Naive thymus-derived CD4-positive, alpha-beta T cell (primary cell): ENCODE measurements at regions of chr9 and their contacts with region 1.

Region 1: DNA sequence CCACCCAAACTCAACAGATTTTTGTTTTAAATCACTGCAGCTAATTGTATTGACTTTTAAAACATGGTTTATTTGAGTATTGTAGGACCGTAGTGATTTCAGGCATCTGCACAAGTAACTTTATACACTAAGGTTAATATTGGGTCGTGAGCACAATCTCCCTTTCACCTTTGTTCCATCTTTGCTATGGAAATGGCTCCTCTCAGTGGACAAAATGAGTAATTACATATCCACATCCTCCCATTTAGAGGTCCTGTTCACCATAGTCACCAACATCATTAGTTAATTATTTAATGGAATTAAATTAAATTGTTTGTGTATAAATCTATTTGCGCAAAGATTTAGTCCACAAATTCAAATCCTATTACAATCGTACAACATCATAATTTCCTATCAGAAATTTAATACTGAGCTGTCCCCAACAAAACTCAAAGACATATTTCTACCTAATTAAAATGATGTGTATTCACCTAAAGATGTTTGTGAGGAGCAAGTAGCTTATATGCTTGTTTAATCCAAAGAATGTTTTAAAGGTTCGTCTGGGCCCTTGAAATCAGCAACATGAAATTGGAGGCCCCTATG is 173.0 kb upstream of the DAPK1 start:
- DNase-seq: peak in 6 of 9 donors; percentile 10 to 41 (median 26)
- ATAC-seq: peak; percentile 48
- H3K4me3 ChIP-seq: no peak overlapping the region
- H3K4me3 Mint-ChIP-seq: no peak overlapping the region
- H3K27ac ChIP-seq: no peak overlapping the region
- H3K27ac Mint-ChIP-seq: no peak overlapping the region
- H3K4me1 ChIP-seq: no peaks in the 10 kb centered on the region
- H3K4me1 Mint-ChIP-seq: peaks cover 0 to 1% (median 0%) of the 10 kb centered on the region in 7 donors
- H3K27me3 ChIP-seq: no peaks in the 10 kb centered on the region
- H3K27me3 Mint-ChIP-seq: peaks cover 0 to 19% (median 12%) of the 10 kb centered on the region in 5 donors

Region 2: DNA sequence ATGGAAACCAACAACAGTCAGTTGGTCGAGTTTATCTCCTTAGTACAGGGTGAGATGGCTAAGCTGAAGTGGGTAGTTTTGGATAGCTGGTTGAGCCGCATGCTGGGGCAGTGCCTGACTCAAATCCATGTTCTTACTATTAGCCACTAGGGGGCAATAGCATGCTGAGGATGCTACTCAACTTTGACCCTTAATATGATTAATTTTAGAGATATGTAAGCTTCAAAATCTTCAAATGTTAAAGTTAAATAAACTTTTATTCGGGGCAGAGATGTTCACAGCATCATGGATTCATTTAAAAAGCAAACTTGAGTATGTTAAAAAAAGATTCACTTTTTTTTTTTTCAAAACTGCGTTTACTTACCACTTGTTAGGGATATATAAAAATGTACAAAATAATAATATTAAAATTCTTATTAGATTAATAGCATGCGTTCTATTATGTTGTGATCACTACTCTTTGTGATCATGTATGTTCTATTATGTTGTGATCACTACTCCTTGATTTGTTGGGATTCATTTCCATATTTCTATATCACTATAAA is 1122.3 kb before region 1 on chr9:
- CTCF ChIA-PET with region 1: interaction called, 4 read pairs
- POLR2A ChIA-PET with region 1: no interaction called
- intact Hi-C with region 1: loop called in 1 of 2 experiments (anchors 10 kb)
- DNase-seq: peak in 6 of 9 donors; percentile 3 to 31 (median 10)
- ATAC-seq: peak; percentile 75
- H3K4me3 ChIP-seq: no peak overlapping the region
- H3K4me3 Mint-ChIP-seq: no peak overlapping the region
- H3K27ac ChIP-seq: no peak overlapping the region
- H3K27ac Mint-ChIP-seq: no peak overlapping the region
- H3K4me1 ChIP-seq: no peaks in the 10 kb centered on the region
- H3K4me1 Mint-ChIP-seq: no peaks in the 10 kb centered on the region
- H3K27me3 ChIP-seq: no peaks in the 10 kb centered on the region
- H3K27me3 Mint-ChIP-seq: peaks cover 0 to 17% (median 6%) of the 10 kb centered on the region in 5 donors

Region 3: DNA sequence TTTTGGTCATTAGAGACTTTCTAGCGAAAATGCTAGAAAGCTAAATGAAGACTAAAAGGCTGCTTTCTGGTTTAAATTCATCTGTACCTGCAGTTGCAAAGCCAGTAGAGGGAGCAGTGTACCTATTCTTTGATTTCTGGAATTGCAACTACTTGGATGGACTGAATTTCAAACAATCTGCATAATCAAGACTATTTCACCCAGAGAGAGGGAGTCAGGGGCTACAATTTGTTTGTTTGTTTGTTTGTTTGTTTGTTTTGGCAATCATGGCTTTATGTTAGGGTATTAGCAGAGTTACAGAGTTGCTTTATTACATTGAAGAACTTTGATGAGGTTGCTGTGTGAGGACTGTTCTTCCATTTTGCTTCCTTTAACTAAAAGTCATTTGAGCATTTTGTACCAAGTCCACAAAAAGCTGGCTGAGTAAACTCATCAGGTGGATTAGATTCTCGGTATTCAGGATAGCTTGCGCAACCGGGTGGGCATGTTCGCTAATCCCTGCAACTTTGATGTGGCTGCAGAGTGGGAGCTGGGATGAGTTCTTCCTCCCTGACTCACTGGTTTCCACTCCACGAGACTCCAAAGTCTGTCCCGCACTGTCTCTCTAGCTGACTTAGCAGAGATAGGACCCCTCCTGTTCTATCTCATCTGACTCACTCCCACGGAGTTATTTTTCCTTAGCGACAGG is 890.5 kb before region 1 on chr9:
- CTCF ChIA-PET with region 1: interaction called, 3 read pairs
- POLR2A ChIA-PET with region 1: no interaction called
- intact Hi-C with region 1: loop called (anchors 1 kb)
- DNase-seq: peak in 5 of 9 donors; percentile 7 to 28 (median 16)
- ATAC-seq: no peak
- H3K4me3 ChIP-seq: no peak overlapping the region
- H3K4me3 Mint-ChIP-seq: no peak overlapping the region
- H3K27ac ChIP-seq: no peak overlapping the region
- H3K27ac Mint-ChIP-seq: no peak overlapping the region
- H3K4me1 ChIP-seq: no peaks in the 10 kb centered on the region
- H3K4me1 Mint-ChIP-seq: no peaks in the 10 kb centered on the region
- H3K27me3 ChIP-seq: peaks cover 0 to 4% of the 10 kb centered on the region in 2 donors
- H3K27me3 Mint-ChIP-seq: peaks cover 2 to 40% (median 31%) of the 10 kb centered on the region in 5 donors

Region 4: GRCh38 chr9:86486891-86487837 is 837.5 kb before region 1 on chr9:
- CTCF ChIA-PET with region 1: interaction called, 4 read pairs
- POLR2A ChIA-PET with region 1: no interaction called
- intact Hi-C with region 1: loop called in 1 of 2 experiments (anchors 1 kb)
- DNase-seq: peak in 2 of 9 donors; percentile 1 to 14
- ATAC-seq: no peak
- H3K4me3 ChIP-seq: no peak overlapping the region
- H3K4me3 Mint-ChIP-seq: no peak overlapping the region
- H3K27ac ChIP-seq: no peak overlapping the region
- H3K27ac Mint-ChIP-seq: no peak overlapping the region
- H3K4me1 ChIP-seq: no peaks in the 10 kb centered on the region
- H3K4me1 Mint-ChIP-seq: peaks cover 0 to 8% (median 4%) of the 10 kb centered on the region in 7 donors
- H3K27me3 ChIP-seq: no peaks in the 10 kb centered on the region
- H3K27me3 Mint-ChIP-seq: peaks cover 0 to 5% (median 4%) of the 10 kb centered on the region in 5 donors

Region 5: GRCh38 chr9:86614871-86615849 is 709.5 kb before region 1 on chr9:
- CTCF ChIA-PET with region 1: no interaction called
- POLR2A ChIA-PET with region 1: no interaction called
- intact Hi-C with region 1: loop called in 1 of 2 experiments (anchors 2 kb)
- DNase-seq: no peak
- ATAC-seq: no peak
- H3K4me3 ChIP-seq: no peak overlapping the region
- H3K4me3 Mint-ChIP-seq: no peak overlapping the region
- H3K27ac ChIP-seq: no peak overlapping the region
- H3K27ac Mint-ChIP-seq: no peak overlapping the region
- H3K4me1 ChIP-seq: no peaks in the 10 kb centered on the region
- H3K4me1 Mint-ChIP-seq: no peaks in the 10 kb centered on the region
- H3K27me3 ChIP-seq: no peaks in the 10 kb centered on the region
- H3K27me3 Mint-ChIP-seq: peaks cover 0 to 20% (median 11%) of the 10 kb centered on the region in 5 donors

Region 6: GRCh38 chr9:86637515-86637914 is 687.2 kb before region 1 on chr9:
- CTCF ChIA-PET with region 1: no interaction called
- POLR2A ChIA-PET with region 1: no interaction called
- intact Hi-C with region 1: loop called in 1 of 2 experiments (anchors 5 kb)
- DNase-seq: no peak
- ATAC-seq: no peak
- H3K4me3 ChIP-seq: no peak overlapping the region
- H3K4me3 Mint-ChIP-seq: no peak overlapping the region
- H3K27ac ChIP-seq: no peak overlapping the region
- H3K27ac Mint-ChIP-seq: no peak overlapping the region
- H3K4me1 ChIP-seq: no peaks in the 10 kb centered on the region
- H3K4me1 Mint-ChIP-seq: no peaks in the 10 kb centered on the region
- H3K27me3 ChIP-seq: no peaks in the 10 kb centered on the region
- H3K27me3 Mint-ChIP-seq: peaks cover 5 to 37% (median 30%) of the 10 kb centered on the region in 5 donors

Region 7: DNA sequence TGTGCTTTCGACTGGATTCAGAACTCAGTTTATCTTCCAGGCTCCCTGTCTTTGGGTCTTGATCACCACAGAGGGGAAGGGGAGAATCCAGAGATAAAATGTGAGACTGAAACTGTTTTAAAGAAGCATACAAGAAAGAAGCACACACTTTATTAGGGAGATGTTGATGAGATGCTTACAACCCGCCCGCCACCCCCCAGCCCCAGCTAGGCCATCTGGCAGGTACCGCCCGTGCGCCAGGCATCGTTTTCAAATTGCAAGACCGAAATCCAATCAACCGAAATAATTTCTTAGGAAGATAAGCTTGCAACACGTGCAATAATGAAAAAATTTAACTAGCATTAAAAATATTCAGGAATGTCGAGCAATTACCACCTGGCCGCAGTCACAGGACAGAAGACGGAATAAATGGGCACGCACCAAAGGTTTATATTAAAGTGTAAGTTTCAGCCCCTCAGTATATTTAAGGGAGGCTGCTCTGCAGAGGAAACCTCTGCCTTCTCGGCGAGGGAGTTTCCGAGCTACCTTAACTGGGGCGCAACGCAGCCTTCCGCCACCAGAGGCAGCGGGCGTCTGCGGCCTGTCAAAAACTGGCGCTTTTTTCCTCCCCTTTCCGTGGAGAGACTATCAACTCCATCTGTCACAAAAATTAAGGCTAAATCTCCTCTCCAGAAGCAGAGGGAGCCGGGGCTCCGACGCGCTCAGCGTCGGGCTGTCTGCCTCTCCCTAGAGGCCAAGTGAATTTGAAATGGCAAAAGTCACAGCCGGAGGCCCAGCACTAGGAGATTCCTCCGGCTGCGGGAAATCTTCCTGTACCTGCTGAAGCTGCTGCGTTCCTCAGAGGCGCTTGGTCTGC is 376.4 kb before region 1 on chr9:
- CTCF ChIA-PET with region 1: interaction called, 3 read pairs
- POLR2A ChIA-PET with region 1: no interaction called
- intact Hi-C with region 1: loop called in 1 of 2 experiments (anchors 1 kb)
- DNase-seq: peak; percentile 50 to 70 (median 66)
- ATAC-seq: peak; percentile 80
- H3K4me3 ChIP-seq: peak overlapping the region; percentile 47
- H3K4me3 Mint-ChIP-seq: peak overlapping the region; percentile 80 to 95 (median 90)
- H3K27ac ChIP-seq: no peak overlapping the region
- H3K27ac Mint-ChIP-seq: peak overlapping the region in 5 of 9 donors; percentile 13 to 75 (median 52)
- H3K4me1 ChIP-seq: peaks cover 5 to 13% of the 10 kb centered on the region in 2 donors
- H3K4me1 Mint-ChIP-seq: peaks cover 7 to 26% (median 15%) of the 10 kb centered on the region in 7 donors
- H3K27me3 ChIP-seq: peaks cover 6 to 16% of the 10 kb centered on the region in 2 donors
- H3K27me3 Mint-ChIP-seq: peaks cover 12 to 35% (median 19%) of the 10 kb centered on the region in 5 donors

Region 8: GRCh38 chr9:86978922-86979474 is 345.7 kb before region 1 on chr9:
- CTCF ChIA-PET with region 1: no interaction called
- POLR2A ChIA-PET with region 1: no interaction called
- intact Hi-C with region 1: no loop called
- DNase-seq: no peak
- ATAC-seq: no peak
- H3K4me3 ChIP-seq: no peak overlapping the region
- H3K4me3 Mint-ChIP-seq: no peak overlapping the region
- H3K27ac ChIP-seq: no peak overlapping the region
- H3K27ac Mint-ChIP-seq: no peak overlapping the region
- H3K4me1 ChIP-seq: no peaks in the 10 kb centered on the region
- H3K4me1 Mint-ChIP-seq: no peaks in the 10 kb centered on the region
- H3K27me3 ChIP-seq: no peaks in the 10 kb centered on the region
- H3K27me3 Mint-ChIP-seq: peaks cover under 1 to 53% (median 43%) of the 10 kb centered on the region in 5 donors